Esophagus squamous epithelium (tissue), 5 donors: ENCODE measurements at regions of chr1 and their contacts with region 1.

Region 1: DNA sequence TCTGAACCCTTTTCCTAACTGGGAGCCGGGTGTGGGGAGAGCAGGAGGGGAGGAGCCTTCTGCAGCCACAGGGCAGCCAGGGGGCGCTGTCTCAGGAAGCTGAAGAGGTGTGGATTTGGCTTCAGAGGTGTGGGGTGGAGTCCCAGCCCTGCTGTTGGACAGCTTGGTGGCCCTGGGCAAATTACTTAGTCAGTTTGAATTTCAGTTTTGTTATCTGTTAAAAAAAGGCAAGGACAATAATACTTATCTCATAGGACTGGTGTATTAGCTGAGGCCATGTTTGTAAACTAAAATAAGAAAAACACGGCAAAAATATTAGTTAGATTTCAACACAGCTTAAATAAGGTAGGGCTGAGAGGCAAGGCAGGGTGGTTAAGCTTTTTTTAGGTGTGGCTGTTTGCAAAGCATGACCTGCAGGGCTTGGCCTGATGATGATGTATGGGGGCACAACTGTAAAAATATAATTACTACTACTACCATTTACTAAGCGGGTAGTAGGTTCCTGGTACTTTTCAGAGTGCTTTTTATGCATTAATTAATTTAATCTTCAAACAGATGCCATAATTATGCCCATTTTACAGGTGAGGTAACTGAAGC is 111.8 kb downstream of the PLXNA2 start:
- DNase-seq: peak; percentile 3
- H3K4me3 ChIP-seq: no peak overlapping the region
- H3K27ac ChIP-seq: peak overlapping the region in 3 of 4 donors; percentile 37 to 67 (median 43)
- H3K4me1 ChIP-seq: peaks cover 4 to 47% (median 14%) of the 10 kb centered on the region in 3 donors
- H3K27me3 ChIP-seq: no peaks in the 10 kb centered on the region
- CTCF ChIP-seq: peak; percentile 53 to 96 (median 87)
- POLR2A ChIP-seq: no peak

Region 2: GRCh38 chr1:208184088-208184911 is 51.9 kb after region 1 on chr1:
- intact Hi-C with region 1: loop called (anchors 10 kb)
- DNase-seq: no peak
- H3K4me3 ChIP-seq: no peak overlapping the region
- H3K27ac ChIP-seq: peak overlapping the region; percentile 73 to 79 (median 77)
- H3K4me1 ChIP-seq: peaks cover 35 to 71% (median 54%) of the 10 kb centered on the region in 3 donors
- H3K27me3 ChIP-seq: no peaks in the 10 kb centered on the region
- CTCF ChIP-seq: no peak
- POLR2A ChIP-seq: no peak

Region 3: GRCh38 chr1:208203127-208203847 is 70.9 kb after region 1 on chr1:
- intact Hi-C with region 1: no loop called
- DNase-seq: no peak
- H3K4me3 ChIP-seq: peak overlapping the region in 1 of 4 donors; percentile 37
- H3K27ac ChIP-seq: peak overlapping the region; percentile 71 to 89 (median 86)
- H3K4me1 ChIP-seq: peaks cover 48 to 78% (median 69%) of the 10 kb centered on the region in 3 donors
- H3K27me3 ChIP-seq: no peaks in the 10 kb centered on the region
- CTCF ChIP-seq: no peak
- POLR2A ChIP-seq: no peak